Activated CD4-positive, alpha-beta T cell treated with anti-CD3 and anti-CD28 coated beads, Interleukin-2, amount 10 ng/mL, durations not matched to agents 24 days and 14 days (primary cell): ENCODE measurements at regions of chr12 and their contacts with region 1.

Region 1: DNA sequence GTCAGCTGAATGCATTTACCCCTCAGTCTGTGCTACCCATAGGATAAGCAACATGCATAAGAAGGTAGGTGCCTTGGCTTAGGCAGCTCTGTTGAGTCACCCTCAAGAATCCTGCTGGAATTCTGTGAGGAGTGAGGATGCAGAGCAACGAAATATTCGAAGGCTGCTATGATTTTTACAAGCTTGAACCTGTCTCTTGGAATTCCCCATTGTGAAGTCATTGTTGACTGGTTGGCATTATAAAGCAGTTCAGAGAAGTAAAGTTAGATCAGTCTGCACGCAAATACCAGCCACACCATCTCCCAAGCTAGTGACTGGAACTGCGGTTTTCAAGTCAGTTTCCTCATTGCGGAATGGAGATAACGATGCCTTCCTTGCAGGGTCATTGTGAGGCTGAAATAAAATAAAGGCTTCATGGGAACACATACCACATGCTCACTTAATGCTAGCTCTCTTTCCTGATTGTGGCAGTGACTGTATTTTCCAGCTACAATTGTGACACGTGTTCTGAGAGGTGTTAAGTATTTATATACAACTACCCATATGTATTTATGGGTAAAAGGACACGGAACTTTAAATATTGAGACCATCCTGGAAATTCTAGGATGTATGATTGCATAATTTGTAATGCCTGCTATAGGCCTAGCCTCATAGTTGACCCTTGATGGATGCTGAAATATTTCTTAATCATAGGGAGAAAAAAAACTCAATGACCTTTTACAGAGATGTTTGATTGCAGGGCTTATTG is 96.7 kb downstream of the ETV6 start:
- DNase-seq: no peak
- H3K4me3 Mint-ChIP-seq: no peak overlapping the region
- H3K27ac Mint-ChIP-seq: peak overlapping the region; percentile 64
- H3K4me1 Mint-ChIP-seq: peaks cover 57% of the 10 kb centered on the region
- H3K27me3 Mint-ChIP-seq: no peaks in the 10 kb centered on the region

Region 2: DNA sequence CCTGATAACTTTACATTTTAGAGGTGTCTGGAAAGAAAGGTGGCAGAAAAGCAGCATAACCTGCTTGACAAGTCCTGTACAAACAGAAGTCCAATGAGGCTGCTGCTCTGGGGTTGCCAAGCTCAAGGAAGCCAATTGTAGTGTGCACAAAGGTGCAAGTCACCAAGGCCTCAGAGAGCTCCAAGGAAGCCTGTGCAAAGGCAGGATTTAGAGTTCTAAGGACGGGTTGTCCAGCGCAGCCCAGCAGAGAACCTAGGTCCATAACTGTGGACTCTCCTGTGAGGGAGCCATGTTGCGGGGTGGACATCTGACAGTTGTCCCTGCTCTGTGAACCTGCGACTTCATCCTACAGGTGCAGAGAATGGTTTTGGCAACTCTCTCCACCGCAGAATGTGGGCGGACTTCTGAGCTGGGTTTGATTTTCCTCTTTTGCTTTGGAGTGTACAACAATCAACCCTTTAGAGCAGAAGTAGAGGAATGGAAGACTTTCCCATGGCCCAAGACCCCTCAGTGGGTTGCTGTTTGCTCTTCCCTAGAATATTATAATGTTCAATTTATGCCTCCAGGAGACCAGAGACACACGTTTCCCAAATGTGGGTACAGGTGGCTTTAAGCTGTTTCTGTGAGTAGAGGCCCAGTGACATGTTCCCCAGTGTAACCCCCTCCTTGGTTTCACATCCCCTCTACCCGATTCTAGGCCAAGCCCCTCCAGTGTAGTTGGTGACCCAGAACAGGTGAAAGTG is 15.7 kb before region 1 on chr12:
- intact Hi-C with region 1: loop called (anchors 1 kb)
- DNase-seq: peak; percentile 69
- H3K4me3 Mint-ChIP-seq: peak overlapping the region; percentile 83
- H3K27ac Mint-ChIP-seq: peak overlapping the region; percentile 95
- H3K4me1 Mint-ChIP-seq: peaks cover 80% of the 10 kb centered on the region
- H3K27me3 Mint-ChIP-seq: no peaks in the 10 kb centered on the region

Region 3: GRCh38 chr12:11765817-11766794 is 19.9 kb after region 1 on chr12:
- intact Hi-C with region 1: loop called (anchors 2 kb)
- DNase-seq: peak; percentile 74
- H3K4me3 Mint-ChIP-seq: peak overlapping the region; percentile 69
- H3K27ac Mint-ChIP-seq: peak overlapping the region; percentile 95
- H3K4me1 Mint-ChIP-seq: peaks cover 90% of the 10 kb centered on the region
- H3K27me3 Mint-ChIP-seq: no peaks in the 10 kb centered on the region